ENCODE measurements at regions of chr2 and their contacts with region 1.

Region 1: DNA sequence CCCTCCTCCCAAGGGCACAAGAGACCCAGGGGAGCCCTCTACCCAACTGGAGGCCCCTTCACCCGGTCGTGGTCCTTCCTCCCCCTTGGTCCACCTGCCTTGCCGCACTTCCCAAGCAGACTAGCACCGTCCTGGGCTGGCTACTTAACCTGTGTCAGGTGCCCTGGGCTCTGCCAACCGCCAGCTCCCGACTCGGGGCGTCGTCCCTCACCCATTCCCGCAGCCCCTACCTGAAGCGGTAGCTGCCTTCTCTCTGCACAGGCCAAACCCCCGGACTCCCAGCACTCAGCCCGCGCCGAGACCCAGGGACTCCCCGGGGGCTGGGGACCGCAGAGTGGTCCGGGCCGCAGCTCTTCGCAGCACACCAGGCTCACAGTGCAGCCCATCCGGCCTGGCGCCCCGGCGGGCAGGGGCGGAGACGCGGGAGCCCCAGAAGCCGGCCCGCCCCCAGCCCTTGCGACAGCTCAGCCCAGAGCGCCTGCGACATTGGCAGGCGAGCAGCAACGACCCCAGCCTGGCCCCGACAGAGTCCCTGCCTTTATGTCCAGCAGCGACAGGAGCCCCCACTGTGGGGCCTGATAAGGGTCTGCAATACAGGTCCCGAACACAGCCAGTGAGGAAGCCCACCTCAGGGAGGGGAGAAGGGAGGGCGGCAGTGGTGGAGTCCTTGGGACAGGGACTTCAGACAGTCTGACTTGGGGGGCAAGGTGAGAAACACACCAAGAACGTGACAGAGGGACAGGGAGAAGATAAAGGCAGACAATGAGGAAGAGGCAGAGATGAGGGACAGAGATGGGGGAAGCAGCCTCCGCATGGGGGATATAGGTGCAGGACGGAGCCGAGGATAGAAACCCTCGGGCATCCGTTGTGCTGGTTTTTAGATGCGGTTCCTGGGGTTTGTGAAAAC is 31.0 kb upstream of the TNS1 start:
- DNase-seq: peak; percentile 20 to 65
- H3K4me3 ChIP-seq: peak overlapping the region in 1 of 2 donors; percentile 39
- H3K27ac ChIP-seq: no peak overlapping the region
- H3K4me1 ChIP-seq: peaks cover 0 to 40% (median 22%) of the 10 kb centered on the region in 4 donors
- H3K27me3 ChIP-seq: no peaks in the 10 kb centered on the region
- CTCF ChIP-seq: no peak

Region 2: GRCh38 chr2:217695033-217695520 is 338.8 kb before region 1 on chr2:
- intact Hi-C with region 1: no loop called
- DNase-seq: peak in 1 of 2 donors; percentile 44
- H3K4me3 ChIP-seq: no peak overlapping the region
- H3K27ac ChIP-seq: peak overlapping the region; percentile 66 to 73
- H3K4me1 ChIP-seq: peaks cover 0 to 78% (median 33%) of the 10 kb centered on the region in 4 donors
- H3K27me3 ChIP-seq: no peaks in the 10 kb centered on the region
- CTCF ChIP-seq: no peak

Region 3: DNA sequence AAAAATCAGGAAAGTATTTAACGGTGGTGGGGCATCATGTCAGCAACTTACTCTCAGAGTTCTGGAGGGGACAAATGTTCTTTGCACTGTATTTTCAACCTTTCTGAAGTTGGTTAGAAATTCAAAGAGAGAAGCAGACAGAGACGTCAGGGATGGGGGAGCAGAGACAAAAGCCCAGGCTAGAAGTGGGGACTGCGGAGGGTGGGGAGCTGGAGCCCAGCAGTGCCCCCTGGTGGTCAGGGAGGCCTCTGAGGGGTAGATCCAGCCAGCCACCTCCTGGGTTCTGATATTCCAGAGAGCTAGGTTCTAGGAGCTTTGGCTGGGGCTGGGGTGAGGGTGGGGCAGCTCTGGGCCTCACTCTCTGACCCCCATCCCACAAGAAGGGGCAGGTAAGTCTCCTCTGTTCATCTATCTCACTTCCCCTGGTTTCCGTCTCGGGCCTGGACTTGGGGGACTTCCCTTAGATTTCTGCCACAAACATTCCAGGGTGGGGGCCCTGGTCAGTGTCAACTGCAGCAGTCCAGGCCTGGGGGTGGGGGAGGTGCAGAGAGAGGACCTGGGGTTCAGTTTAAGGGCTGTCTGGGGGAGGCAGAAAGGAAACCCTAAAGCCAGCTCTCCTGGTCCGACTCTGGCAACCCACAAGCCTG is 39.9 kb before region 1 on chr2:
- intact Hi-C with region 1: loop called (anchors 5 kb)
- DNase-seq: peak in 1 of 2 donors; percentile 84
- H3K4me3 ChIP-seq: no peak overlapping the region
- H3K27ac ChIP-seq: peak overlapping the region; percentile 72 to 74
- H3K4me1 ChIP-seq: peaks cover 0 to 45% (median 38%) of the 10 kb centered on the region in 4 donors
- H3K27me3 ChIP-seq: no peaks in the 10 kb centered on the region
- CTCF ChIP-seq: peak; percentile 68 to 80

Region 4: DNA sequence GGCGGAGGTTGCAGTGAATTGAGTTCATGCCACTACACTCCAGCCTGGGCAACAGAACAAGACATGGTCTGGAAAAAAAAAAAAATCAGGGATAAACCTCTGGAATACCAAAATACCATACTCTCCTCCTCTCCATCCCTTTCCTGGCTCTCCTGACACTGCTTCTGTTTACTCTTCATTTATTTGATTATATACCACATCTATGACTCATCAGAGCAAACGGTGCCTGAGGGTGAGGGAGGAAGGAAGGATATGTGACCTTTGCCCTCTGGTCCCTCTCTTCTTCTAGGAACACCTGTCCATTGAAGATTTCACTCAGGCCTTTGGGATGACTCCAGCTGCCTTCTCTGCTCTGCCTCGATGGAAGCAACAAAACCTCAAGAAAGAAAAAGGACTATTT is 415.1 kb after region 1 on chr2:
- intact Hi-C with region 1: no loop called
- DNase-seq: no peak
- H3K4me3 ChIP-seq: no peak overlapping the region
- H3K27ac ChIP-seq: no peak overlapping the region
- H3K4me1 ChIP-seq: no peaks in the 10 kb centered on the region
- H3K27me3 ChIP-seq: no peaks in the 10 kb centered on the region
- CTCF ChIP-seq: no peak

Measured in tibial artery (tissue), 4 donors.